Stomach (tissue), 19 donors: ENCODE measurements at regions of chr6 and their contacts with region 1.

Region 1: DNA sequence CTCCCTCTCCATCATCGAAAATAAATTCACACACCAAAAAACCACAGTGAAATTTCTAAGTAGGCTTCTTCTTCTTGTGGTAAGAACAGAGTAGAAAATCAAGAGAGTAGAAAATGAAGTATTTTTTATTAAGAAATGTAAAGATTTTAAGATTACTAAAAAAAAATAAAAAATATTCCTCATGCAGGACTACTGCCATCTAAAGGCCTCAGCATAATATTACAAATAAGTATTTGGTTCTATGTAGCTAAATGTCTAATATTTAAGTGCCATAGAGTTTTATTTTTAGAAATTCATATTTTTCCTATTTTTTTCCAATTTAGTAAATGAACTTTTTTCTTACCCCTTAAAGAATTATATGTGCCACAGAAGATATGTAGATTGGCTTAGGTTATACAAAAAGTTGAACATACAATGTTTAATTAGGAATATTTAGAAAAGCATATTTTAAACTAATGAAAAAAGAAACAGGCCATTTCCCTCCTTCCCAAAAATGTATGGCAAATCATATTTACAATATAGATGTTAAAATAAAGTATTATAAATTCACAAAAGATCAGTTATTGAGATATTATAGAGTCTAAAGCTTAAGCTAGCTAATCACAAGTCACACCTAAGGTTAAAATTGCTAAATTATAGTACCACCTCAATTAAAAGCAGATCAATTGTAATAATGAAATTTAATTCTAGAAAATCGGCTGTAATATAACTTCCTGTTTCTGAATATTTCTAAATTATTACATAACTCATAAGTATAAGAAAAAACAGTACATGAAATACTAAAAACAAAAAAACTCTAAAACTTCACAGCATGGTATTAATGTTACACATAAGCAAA is 3.5 kb upstream of the NT5DC1 start:
- DNase-seq: no peak
- H3K4me3 ChIP-seq: no peak overlapping the region
- H3K27ac ChIP-seq: no peak overlapping the region
- H3K4me1 ChIP-seq: peaks cover 8 to 44% (median 21%) of the 10 kb centered on the region in 4 donors
- H3K27me3 ChIP-seq: no peaks in the 10 kb centered on the region
- CTCF ChIP-seq: peak in 4 of 7 experiments; percentile 18 to 52 (median 37)
- EP300 ChIP-seq: no peak
- POLR2A ChIP-seq: no peak

Region 2: GRCh38 chr6:116010790-116011401 is 86.3 kb before region 1 on chr6:
- intact Hi-C with region 1: loop called (anchors 5 kb)
- DNase-seq: peak; percentile 75 to 86
- H3K4me3 ChIP-seq: no peak overlapping the region
- H3K27ac ChIP-seq: peak overlapping the region in 2 of 5 donors; percentile 57 to 69
- H3K4me1 ChIP-seq: peaks cover 22 to 56% (median 35%) of the 10 kb centered on the region in 4 donors
- H3K27me3 ChIP-seq: no peaks in the 10 kb centered on the region
- CTCF ChIP-seq: peak in 5 of 7 experiments; percentile 59 to 82 (median 69)
- EP300 ChIP-seq: no peak
- POLR2A ChIP-seq: no peak